GM12878 (cell line): ENCODE measurements at regions of chr6 and their contacts with region 1.

Region 1: GRCh38 chr6:15621203-15622044 is 41.4 kb downstream of the DTNBP1 start:
- DNase-seq: peak; percentile 62
- ATAC-seq: peak; percentile 100
- H3K4me3 ChIP-seq: no peak overlapping the region
- H3K27ac ChIP-seq: peak overlapping the region; percentile 82
- H3K4me1 ChIP-seq: peaks cover 12% of the 10 kb centered on the region
- H3K27me3 ChIP-seq: no peaks in the 10 kb centered on the region
- CTCF ChIP-seq: no peak
- EP300 ChIP-seq: 0 out of 4 replicates have a peak, but pooled peaks of 1 of the 2 experiments have one; percentile 17
- POLR2A ChIP-seq: peak; percentile 54; the same call in 1 of the 2 replicates
- RAD21 ChIP-seq: no peak; the same call in 1 of the 2 replicates

Region 2: GRCh38 chr6:15017261-15017660 is 604.2 kb before region 1 on chr6:
- CTCF ChIA-PET with region 1: no interaction called
- POLR2A ChIA-PET with region 1: no interaction called
- RAD21 ChIA-PET with region 1: no interaction called
- SMC1A ChIA-PET with region 1: no interaction called
- in situ Hi-C with region 1: no loop called
- intact Hi-C with region 1: no loop called
- DNase-seq: no peak
- ATAC-seq: peak; percentile 38; the same call in 1 of the 3 replicates
- H3K4me3 ChIP-seq: no peak overlapping the region
- H3K27ac ChIP-seq: no peak overlapping the region
- H3K4me1 ChIP-seq: peaks cover 8% of the 10 kb centered on the region
- H3K27me3 ChIP-seq: no peaks in the 10 kb centered on the region
- CTCF ChIP-seq: no peak
- EP300 ChIP-seq: no peak
- POLR2A ChIP-seq: no peak
- RAD21 ChIP-seq: no peak

Region 3: GRCh38 chr6:15245361-15246216 is 375.8 kb before region 1 on chr6 and contains the start of gene JARID2:
- CTCF ChIA-PET with region 1: interaction called, 4 read pairs
- POLR2A ChIA-PET with region 1: interaction called, 3 read pairs
- RAD21 ChIA-PET with region 1: no interaction called
- SMC1A ChIA-PET with region 1: interaction called, 3 read pairs
- in situ Hi-C with region 1: no loop called
- intact Hi-C with region 1: loop called (anchors 10 kb)
- DNase-seq: peak; percentile 91
- ATAC-seq: peak; percentile 72
- H3K4me3 ChIP-seq: peak within 1 kb of the TSS; percentile 97
- H3K27ac ChIP-seq: peak within 1 kb of the TSS; percentile 97
- H3K4me1 ChIP-seq: peaks cover under 1% of the 10 kb centered on the region; the same call in 1 of the 2 replicates
- H3K27me3 ChIP-seq: no peaks in the 10 kb centered on the region
- CTCF ChIP-seq: no peak
- EP300 ChIP-seq: 0 out of 4 replicates have a peak, but pooled peaks of 1 of the 2 experiments have one; percentile 14
- POLR2A ChIP-seq: peak; percentile 57; the same call in 1 of the 2 replicates
- RAD21 ChIP-seq: no peak
- polyA plus RNA-seq, gene JARID2: 4.2 to 5.2 TPM

Region 4: DNA sequence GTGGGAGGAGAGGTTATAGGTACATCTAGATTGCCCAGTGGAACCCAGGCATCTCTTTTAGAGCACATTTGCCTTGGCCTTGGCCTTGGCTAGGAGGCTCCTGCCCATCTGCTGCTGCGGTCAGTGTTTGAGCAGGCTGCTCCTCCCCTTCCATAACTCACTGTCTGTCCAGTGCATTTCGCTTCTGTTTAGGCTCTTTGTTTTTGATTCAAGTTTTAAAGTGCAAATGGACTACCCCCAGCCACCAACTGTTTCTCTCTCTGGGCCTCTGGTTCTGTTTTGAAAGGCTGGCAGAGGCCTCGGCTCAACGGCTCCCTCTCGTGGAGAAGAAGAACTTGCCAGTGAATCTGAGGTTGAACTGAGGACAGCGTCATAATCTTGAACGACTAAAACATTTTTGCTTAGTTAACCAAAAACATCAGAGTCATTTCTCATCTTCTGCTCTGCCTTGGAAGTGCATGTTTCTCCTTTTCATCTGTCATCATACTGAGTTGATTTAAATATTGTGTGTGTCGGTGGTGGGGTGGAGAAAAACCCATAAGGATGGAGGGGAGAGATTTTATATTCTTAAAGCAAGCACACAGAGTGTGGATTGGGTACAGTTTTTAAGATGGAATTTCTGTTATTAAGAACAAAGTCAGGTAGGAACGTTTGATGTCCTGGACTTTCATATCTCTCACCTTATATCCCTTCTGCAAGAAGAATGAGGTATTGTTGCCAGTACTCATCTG is 130.0 kb before region 1 on chr6:
- CTCF ChIA-PET with region 1: interaction called, 26 read pairs
- POLR2A ChIA-PET with region 1: no interaction called
- RAD21 ChIA-PET with region 1: interaction called, 9 read pairs
- SMC1A ChIA-PET with region 1: interaction called, 13 read pairs
- in situ Hi-C with region 1: no loop called
- intact Hi-C with region 1: loop called (anchors 1 kb)
- DNase-seq: peak; percentile 17
- ATAC-seq: peak; percentile 94
- H3K4me3 ChIP-seq: no peak overlapping the region
- H3K27ac ChIP-seq: no peak overlapping the region
- H3K4me1 ChIP-seq: no peaks in the 10 kb centered on the region
- H3K27me3 ChIP-seq: no peaks in the 10 kb centered on the region
- CTCF ChIP-seq: peak; percentile 86 to 87 (median 86)
- EP300 ChIP-seq: no peak
- POLR2A ChIP-seq: no peak
- RAD21 ChIP-seq: peak; percentile 91

Region 5: GRCh38 chr6:15539722-15540270 is 81.6 kb before region 1 on chr6:
- CTCF ChIA-PET with region 1: interaction called, 6 read pairs
- POLR2A ChIA-PET with region 1: no interaction called
- RAD21 ChIA-PET with region 1: interaction called, 3 read pairs
- SMC1A ChIA-PET with region 1: interaction called, 10 read pairs
- in situ Hi-C with region 1: no loop called
- intact Hi-C with region 1: no loop called
- DNase-seq: no peak
- ATAC-seq: no peak
- H3K4me3 ChIP-seq: no peak overlapping the region
- H3K27ac ChIP-seq: no peak overlapping the region
- H3K4me1 ChIP-seq: no peaks in the 10 kb centered on the region
- H3K27me3 ChIP-seq: no peaks in the 10 kb centered on the region
- CTCF ChIP-seq: no peak
- EP300 ChIP-seq: no peak
- POLR2A ChIP-seq: no peak
- RAD21 ChIP-seq: no peak

Region 6: GRCh38 chr6:15653581-15653980 is 32.2 kb after region 1 on chr6:
- CTCF ChIA-PET with region 1: interaction called, 26 read pairs
- POLR2A ChIA-PET with region 1: no interaction called
- RAD21 ChIA-PET with region 1: interaction called, 11 read pairs
- SMC1A ChIA-PET with region 1: interaction called, 48 read pairs
- in situ Hi-C with region 1: no loop called
- intact Hi-C with region 1: no loop called
- DNase-seq: peak; percentile 36
- ATAC-seq: peak; percentile 74
- H3K4me3 ChIP-seq: no peak overlapping the region
- H3K27ac ChIP-seq: peak overlapping the region; percentile 1; the same call in 1 of the 2 replicates
- H3K4me1 ChIP-seq: peaks cover 23% of the 10 kb centered on the region
- H3K27me3 ChIP-seq: no peaks in the 10 kb centered on the region
- CTCF ChIP-seq: no peak
- EP300 ChIP-seq: no peak
- POLR2A ChIP-seq: no peak
- RAD21 ChIP-seq: no peak

Region 7: GRCh38 chr6:16183187-16183664 is 561.8 kb after region 1 on chr6:
- CTCF ChIA-PET with region 1: interaction called, 17 read pairs
- POLR2A ChIA-PET with region 1: no interaction called
- RAD21 ChIA-PET with region 1: interaction called, 9 read pairs
- SMC1A ChIA-PET with region 1: interaction called, 14 read pairs
- in situ Hi-C with region 1: no loop called
- intact Hi-C with region 1: no loop called
- DNase-seq: peak; percentile 35
- ATAC-seq: peak; percentile 65
- H3K4me3 ChIP-seq: no peak overlapping the region
- H3K27ac ChIP-seq: no peak overlapping the region
- H3K4me1 ChIP-seq: no peaks in the 10 kb centered on the region
- H3K27me3 ChIP-seq: no peaks in the 10 kb centered on the region; a peak in 1 of 4 replicates
- CTCF ChIP-seq: peak; percentile 61 to 79 (median 63)
- EP300 ChIP-seq: no peak
- POLR2A ChIP-seq: no peak
- RAD21 ChIP-seq: peak; percentile 78